Esophagus muscularis mucosa (tissue), 4 donors: ENCODE measurements at regions of chr13 and their contacts with region 1.

Region 1: GRCh38 chr13:79480954-79481684 is at the start of gene NDFIP2:
- DNase-seq: no peak
- H3K4me3 ChIP-seq: peak within 1 kb of the TSS; percentile 73 to 92 (median 78)
- H3K27ac ChIP-seq: peak within 1 kb of the TSS; percentile 77 to 79 (median 78)
- H3K4me1 ChIP-seq: peaks cover 14 to 31% (median 22%) of the 10 kb centered on the region in 4 donors
- H3K27me3 ChIP-seq: no peaks in the 10 kb centered on the region
- CTCF ChIP-seq: no peak
- EP300 ChIP-seq: no peak
- POLR2A ChIP-seq: peak; percentile 8
- total RNA-seq, gene NDFIP2: 9.0 to 12.8 (median 10.2) TPM

Region 2: GRCh38 chr13:79533781-79534400 is 52.8 kb after region 1 on chr13:
- intact Hi-C with region 1: loop called (anchors 10 kb)
- DNase-seq: no peak
- H3K4me3 ChIP-seq: no peak overlapping the region
- H3K27ac ChIP-seq: no peak overlapping the region
- H3K4me1 ChIP-seq: peaks cover 0 to 8% (median 0%) of the 10 kb centered on the region in 4 donors
- H3K27me3 ChIP-seq: no peaks in the 10 kb centered on the region
- CTCF ChIP-seq: no peak
- EP300 ChIP-seq: no peak
- POLR2A ChIP-seq: no peak